Right ventricle myocardium superior (tissue), 1 donor: ENCODE measurements at regions of chr7 and their contacts with region 1.

Region 1: GRCh38 chr7:37495574-37496184 is 47.0 kb upstream of the ELMO1 start:
- DNase-seq: no peak
- ATAC-seq: no peak

Region 2: GRCh38 chr7:37234928-37235327 is 260.8 kb before region 1 on chr7:
- intact Hi-C with region 1: loop called (anchors 10 kb)
- DNase-seq: no peak
- ATAC-seq: no peak

Region 3: GRCh38 chr7:37275078-37275710 is 220.5 kb before region 1 on chr7:
- intact Hi-C with region 1: loop called (anchors 10 kb)
- DNase-seq: no peak
- ATAC-seq: no peak

Region 4: GRCh38 chr7:37391791-37392672 is 103.6 kb before region 1 on chr7:
- intact Hi-C with region 1: no loop called
- DNase-seq: no peak
- ATAC-seq: peak; percentile 65